Thyroid gland (tissue), 4 donors: ENCODE measurements at regions of chr1 and their contacts with region 1.

Region 1: GRCh38 chr1:116110567-116111523 is at the start of gene MAB21L3:
- DNase-seq: no peak
- H3K4me3 ChIP-seq: no peak within 1 kb of the TSS
- H3K27ac ChIP-seq: peak within 1 kb of the TSS; percentile 73 to 89 (median 85)
- H3K4me1 ChIP-seq: peaks cover 10 to 33% of the 10 kb centered on the region in 2 donors
- H3K27me3 ChIP-seq: no peaks in the 10 kb centered on the region
- CTCF ChIP-seq: no peak
- POLR2A ChIP-seq: no peak
- total RNA-seq, gene MAB21L3: 0.34 to 0.89 (median 0.73) TPM

Region 2: GRCh38 chr1:115496904-115497527 is 613.8 kb before region 1 on chr1:
- intact Hi-C with region 1: loop called (anchors 10 kb)
- DNase-seq: peak; percentile 44 to 56
- H3K4me3 ChIP-seq: no peak overlapping the region
- H3K27ac ChIP-seq: peak overlapping the region; percentile 40 to 72 (median 48)
- H3K4me1 ChIP-seq: peaks cover 36 to 53% of the 10 kb centered on the region in 2 donors
- H3K27me3 ChIP-seq: no peaks in the 10 kb centered on the region
- CTCF ChIP-seq: no peak
- POLR2A ChIP-seq: no peak

Region 3: DNA sequence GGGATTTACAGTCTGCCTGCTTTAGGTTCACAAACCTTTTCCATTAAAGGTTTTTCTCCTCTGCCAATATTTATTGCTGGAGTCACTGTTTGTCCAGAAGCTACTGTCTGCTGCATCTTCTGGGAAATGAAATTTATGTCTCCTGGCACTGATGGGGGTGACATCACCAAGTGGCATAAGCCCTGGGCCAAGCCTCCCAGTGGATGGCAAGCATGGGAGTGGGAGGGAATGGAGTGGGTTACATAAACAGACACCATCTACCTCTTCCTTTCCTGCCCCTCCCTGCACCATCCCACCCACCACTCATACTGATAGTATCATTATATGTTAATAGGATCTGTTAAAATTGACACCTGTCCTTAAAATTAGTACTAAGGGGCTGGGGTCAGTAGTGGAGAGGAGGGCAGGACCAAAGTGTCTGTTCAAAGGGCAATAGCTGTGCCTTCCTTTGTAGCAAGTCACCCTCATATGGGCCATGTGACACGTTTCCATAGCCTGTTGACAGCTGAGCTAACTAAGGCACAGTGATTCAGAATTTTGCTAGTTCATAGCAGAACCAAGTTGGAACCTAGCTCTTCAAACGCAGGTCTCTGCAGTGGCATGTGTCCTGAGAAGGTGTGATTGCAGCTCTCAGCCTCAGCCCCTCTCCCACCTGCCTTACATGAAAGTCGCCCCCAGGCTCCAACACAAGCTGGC is 71.3 kb after region 1 on chr1:
- intact Hi-C with region 1: no loop called
- DNase-seq: no peak
- H3K4me3 ChIP-seq: no peak overlapping the region
- H3K27ac ChIP-seq: no peak overlapping the region
- H3K4me1 ChIP-seq: no peaks in the 10 kb centered on the region
- H3K27me3 ChIP-seq: no peaks in the 10 kb centered on the region
- CTCF ChIP-seq: no peak
- POLR2A ChIP-seq: no peak